ENCODE measurements at regions of chr2 and their contacts with region 1.

Region 1: GRCh38 chr2:46852598-46853305 is 62.9 kb downstream of the MCFD2 start:
- DNase-seq: no peak
- H3K4me3 ChIP-seq: no peak overlapping the region
- H3K27me3 ChIP-seq: no peaks in the 10 kb centered on the region
- CTCF ChIP-seq: no peak

Region 2: DNA sequence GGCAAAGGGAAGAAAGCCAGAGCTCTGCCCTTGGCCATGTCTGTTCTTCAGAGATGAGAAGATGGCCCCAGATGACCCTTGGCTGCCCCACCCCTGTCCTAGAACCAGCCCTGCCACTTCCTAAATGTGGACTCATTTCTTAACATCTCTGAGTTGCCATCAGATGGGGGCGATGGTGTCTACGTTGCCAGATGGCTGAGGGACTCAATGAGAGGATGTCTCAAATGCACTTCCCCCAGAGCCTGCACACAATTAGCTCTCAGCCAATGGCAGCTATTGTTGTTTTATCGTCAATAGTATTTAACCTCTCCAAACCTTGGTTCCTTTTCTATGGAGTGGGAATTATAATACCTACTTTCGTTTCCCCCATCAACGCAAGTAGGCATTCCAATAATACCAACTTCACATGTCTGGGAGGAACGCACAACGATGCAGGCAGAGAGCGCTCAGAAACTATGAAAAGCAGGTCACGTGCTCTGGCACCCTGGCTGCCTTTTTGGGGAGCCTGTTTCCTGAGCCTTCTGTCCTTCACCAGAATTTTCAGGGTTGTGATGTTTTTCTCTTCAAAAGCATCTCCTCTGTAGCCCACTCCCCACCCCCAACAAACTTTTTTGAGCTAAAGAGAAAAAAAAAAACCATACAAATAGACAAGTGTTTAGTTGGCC is 37.5 kb before region 1 on chr2:
- CTCF ChIA-PET with region 1: no interaction called
- POLR2A ChIA-PET with region 1: interaction called, 16 read pairs
- DNase-seq: no peak
- H3K4me3 ChIP-seq: no peak overlapping the region
- H3K27me3 ChIP-seq: no peaks in the 10 kb centered on the region
- CTCF ChIP-seq: no peak

Region 3: DNA sequence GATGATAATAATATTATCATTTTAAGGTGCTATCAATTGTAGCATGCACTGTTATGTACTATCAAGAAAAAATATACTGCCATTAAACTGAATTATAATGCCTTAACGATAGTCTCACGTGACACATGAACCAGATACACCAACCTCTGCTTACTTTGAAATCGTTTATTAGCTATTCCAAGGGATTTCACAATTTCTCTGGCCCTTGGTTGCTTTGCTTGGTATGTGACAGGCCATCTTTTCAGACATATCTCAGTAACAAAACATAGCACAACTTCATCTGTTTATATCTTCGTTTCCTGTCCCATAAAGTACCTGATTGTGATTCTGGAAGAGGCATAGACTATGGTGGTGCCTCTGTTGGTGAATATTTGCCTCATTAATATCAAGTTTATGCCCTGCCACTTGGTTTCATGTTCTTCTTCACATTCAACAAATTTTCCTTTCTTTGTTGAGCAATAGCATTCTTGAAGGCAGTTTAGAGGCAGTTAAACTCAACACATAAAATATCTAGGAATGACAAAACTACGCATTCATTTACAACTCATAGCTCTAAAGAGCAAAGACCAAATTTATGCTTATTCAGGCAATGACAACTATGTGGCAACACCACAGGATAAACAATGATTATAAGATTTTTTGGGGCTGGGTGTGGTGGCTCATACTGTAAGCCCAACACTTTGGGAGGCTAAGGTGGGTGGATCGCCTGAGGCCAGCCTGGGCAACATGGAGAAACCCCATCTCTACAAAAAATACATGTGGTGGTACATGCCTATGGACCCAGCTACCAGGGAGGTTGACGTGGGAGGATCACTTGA is 21.5 kb before region 1 on chr2:
- CTCF ChIA-PET with region 1: interaction called, 3 read pairs
- POLR2A ChIA-PET with region 1: interaction called, 16 read pairs
- DNase-seq: peak; percentile 95
- H3K4me3 ChIP-seq: no peak overlapping the region
- H3K27me3 ChIP-seq: no peaks in the 10 kb centered on the region
- CTCF ChIP-seq: no peak

Measured in BJ (cell line).